AG04449 (cell line): ENCODE measurements at regions of chr3 and their contacts with region 1.

Region 1: GRCh38 chr3:62188681-62189383 is 184.5 kb downstream of the FEZF2 start:
- DNase-seq: peak; percentile 23
- H3K4me3 ChIP-seq: peak overlapping the region; percentile 21; the same call in 1 of the 2 replicates
- CTCF ChIP-seq: peak; percentile 76

Region 2: DNA sequence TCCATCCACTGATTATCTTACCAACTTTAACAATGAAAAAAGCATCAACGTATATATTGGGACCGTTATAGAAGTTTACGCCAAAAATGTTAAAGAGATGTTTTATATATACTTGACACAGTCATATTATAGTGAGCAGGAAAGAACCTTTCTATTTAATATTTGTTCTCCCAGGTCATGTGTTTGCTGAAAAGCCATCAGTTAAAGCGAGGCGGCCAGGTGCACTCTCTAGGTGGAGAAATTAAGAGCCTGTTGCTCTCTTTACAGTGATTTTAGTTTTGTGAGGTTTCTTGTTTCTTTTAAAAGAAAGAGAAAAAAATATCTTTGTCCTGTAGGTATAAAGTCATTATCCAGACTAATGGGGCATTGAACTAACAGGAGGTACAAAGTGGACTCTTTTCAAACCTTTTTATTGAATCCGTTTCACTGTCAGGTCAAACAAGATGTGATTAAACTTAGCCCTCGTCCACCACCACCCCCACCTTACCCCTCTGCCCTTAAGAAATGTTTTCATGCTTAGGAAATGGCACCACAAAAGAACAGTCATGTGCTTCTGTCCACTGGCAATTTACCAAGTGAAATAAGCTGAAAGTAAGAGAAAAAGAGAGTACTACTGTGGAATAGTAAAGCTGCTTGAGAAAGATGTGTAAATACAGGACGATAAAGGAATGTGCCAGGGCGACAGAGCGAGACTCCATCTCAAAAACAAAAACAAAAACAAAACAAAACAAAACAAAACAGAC is 347.6 kb before region 1 on chr3:
- CTCF ChIA-PET with region 1: interaction called, 17 read pairs
- POLR2A ChIA-PET with region 1: no interaction called
- DNase-seq: no peak
- H3K4me3 ChIP-seq: no peak overlapping the region
- CTCF ChIP-seq: no peak

Region 3: DNA sequence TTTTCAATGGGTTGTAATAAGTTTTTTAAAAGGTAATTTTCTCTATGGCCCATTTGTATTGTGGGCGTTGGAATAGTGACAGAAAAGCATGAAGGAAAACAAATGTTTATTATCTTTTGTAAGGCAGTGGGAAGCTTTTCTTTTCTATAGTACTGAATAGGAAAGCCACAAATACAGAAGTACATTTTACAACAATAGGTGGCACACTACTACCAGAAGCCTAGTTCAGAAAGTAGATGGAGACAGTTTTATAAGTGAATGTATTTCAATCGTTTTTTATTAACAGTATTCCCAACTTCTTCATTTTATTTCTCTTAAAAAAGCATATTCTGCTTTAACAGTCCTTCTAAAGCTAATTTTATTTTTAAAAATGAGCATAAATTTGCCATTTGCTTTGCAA is 330.8 kb before region 1 on chr3:
- CTCF ChIA-PET with region 1: interaction called, 46 read pairs
- POLR2A ChIA-PET with region 1: no interaction called
- DNase-seq: no peak
- H3K4me3 ChIP-seq: no peak overlapping the region
- CTCF ChIP-seq: peak; percentile 31

Region 4: GRCh38 chr3:62101488-62101887 is 87.3 kb before region 1 on chr3:
- CTCF ChIA-PET with region 1: no interaction called
- POLR2A ChIA-PET with region 1: no interaction called
- DNase-seq: no peak
- H3K4me3 ChIP-seq: no peak overlapping the region
- CTCF ChIP-seq: no peak

Region 5: DNA sequence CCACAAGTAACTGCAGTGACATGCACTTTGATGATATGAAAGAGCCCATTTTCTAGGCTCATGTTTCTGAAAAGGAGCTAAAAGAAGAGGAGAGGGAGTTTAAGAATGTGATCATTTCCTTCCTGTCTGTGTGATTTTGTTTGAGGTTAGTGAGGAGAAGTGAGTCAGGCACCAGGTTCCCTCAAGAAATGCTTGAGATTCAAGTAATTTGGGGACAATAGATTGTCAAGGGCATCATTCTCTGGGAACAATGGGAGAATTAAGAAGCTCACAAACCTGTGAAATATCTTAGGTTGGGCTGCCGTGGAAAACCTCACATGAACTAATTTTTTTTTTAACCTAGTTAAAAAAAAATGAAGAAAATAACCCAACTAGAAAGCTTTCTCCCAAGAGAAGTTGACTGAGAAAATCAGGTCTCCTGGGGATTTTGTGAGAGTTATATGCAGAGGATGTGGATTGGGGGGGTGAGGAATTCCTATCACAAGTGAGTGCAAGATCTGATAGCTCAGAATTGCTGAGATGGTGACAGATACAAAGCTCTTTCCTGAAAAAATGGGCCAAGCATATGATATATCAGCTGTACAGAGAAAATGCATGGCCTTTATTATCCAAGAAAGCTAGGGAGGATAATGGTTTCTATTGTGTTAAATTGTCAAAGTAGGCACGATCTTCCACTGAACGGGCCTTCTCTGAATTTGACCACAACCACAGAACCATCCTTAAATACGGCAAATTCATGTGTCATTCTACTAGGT is 18.7 kb before region 1 on chr3:
- CTCF ChIA-PET with region 1: interaction called, 52 read pairs
- POLR2A ChIA-PET with region 1: no interaction called
- DNase-seq: no peak
- H3K4me3 ChIP-seq: no peak overlapping the region
- CTCF ChIP-seq: no peak

Region 6: GRCh38 chr3:62318750-62319569 is 130.1 kb after region 1 on chr3:
- CTCF ChIA-PET with region 1: no interaction called
- POLR2A ChIA-PET with region 1: no interaction called
- DNase-seq: peak; percentile 16
- H3K4me3 ChIP-seq: peak overlapping the region; percentile 76
- CTCF ChIP-seq: no peak

Region 7: GRCh38 chr3:62436785-62437184 is 248.0 kb after region 1 on chr3:
- CTCF ChIA-PET with region 1: no interaction called
- POLR2A ChIA-PET with region 1: no interaction called
- DNase-seq: no peak
- H3K4me3 ChIP-seq: no peak overlapping the region
- CTCF ChIP-seq: no peak